Dorsolateral prefrontal cortex (tissue), 120 donors: ENCODE measurements at regions of chr2 and their contacts with region 1.

Region 1: GRCh38 chr2:84022810-84023431 is 436.2 kb downstream of the SUCLG1 start:
- DNase-seq: peak in 1 of 10 donors; percentile 15
- H3K4me3 ChIP-seq: no peak overlapping the region
- H3K27ac ChIP-seq: no peak overlapping the region
- H3K27me3 ChIP-seq: no peaks in the 10 kb centered on the region
- CTCF ChIP-seq: peak; percentile 46 to 81 (median 70)

Region 2: GRCh38 chr2:84144345-84144744 is 121.4 kb after region 1 on chr2:
- intact Hi-C with region 1: no loop called
- DNase-seq: no peak
- H3K4me3 ChIP-seq: no peak overlapping the region
- H3K27ac ChIP-seq: no peak overlapping the region
- H3K27me3 ChIP-seq: no peaks in the 10 kb centered on the region
- CTCF ChIP-seq: no peak

Region 3: DNA sequence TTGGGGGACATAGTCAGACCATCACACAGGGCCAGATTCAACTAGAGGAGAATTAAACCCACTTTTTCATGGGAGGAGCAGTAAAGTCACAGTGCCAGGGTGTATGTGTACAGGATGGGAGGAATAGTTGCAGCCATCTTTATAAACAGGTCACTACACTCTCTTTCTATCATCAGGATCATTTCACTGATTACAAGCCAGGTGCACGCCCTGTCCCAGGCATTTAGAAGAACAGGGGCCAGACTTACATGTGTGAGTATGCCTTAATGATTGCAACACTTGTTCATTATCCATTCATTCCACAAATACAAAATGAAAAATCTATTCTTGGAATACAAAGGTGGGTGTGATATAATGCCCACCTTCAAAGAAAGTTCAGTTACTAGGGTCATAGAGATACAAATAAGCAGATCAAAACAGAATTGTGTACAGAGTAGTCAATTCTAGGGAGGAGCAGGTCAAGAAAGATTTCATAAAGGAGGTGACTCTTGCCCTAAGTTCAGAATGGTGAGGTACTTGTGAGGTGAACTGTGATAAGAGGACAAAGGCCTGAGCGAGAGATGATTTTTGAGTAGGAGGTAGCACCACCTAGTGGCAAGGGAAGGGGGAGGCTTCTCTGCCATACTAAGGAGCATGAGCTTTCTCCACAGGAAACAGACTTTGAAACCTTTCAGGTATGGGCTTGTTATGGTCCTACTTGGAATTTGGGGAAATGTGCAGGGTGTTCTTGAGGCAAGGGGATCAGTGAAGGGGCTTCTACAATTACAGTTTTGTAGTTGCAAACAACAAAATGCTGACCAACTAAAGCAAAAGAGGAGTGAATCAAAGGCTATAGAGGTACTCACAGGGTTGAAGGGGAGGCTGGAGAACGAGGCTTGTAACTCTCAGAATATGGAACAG is 279.8 kb after region 1 on chr2:
- intact Hi-C with region 1: loop called in 1 of 2 experiments (anchors 5 kb)
- DNase-seq: peak in 7 of 10 donors; percentile 8 to 58 (median 41)
- H3K4me3 ChIP-seq: no peak overlapping the region
- H3K27ac ChIP-seq: no peak overlapping the region
- H3K27me3 ChIP-seq: peaks cover 0 to 8% (median 0%) of the 10 kb centered on the region in 45 donors
- CTCF ChIP-seq: peak; percentile 50 to 93 (median 83)